Activated naive CD4-positive, alpha-beta T cell treated with anti-CD3 and anti-CD28 coated beads for 36 hours (primary cell): ENCODE measurements at regions of chr7 and their contacts with region 1.

Region 1: GRCh38 chr7:64902806-64903721 is at the start of gene ZNF273:
- DNase-seq: peak; percentile 97
- H3K4me3 Mint-ChIP-seq: peak within 1 kb of the TSS; percentile 96
- H3K27ac Mint-ChIP-seq: peak within 1 kb of the TSS; percentile 89
- H3K4me1 Mint-ChIP-seq: peaks cover 35% of the 10 kb centered on the region
- H3K27me3 Mint-ChIP-seq: no peaks in the 10 kb centered on the region
- total RNA-seq, gene ZNF273: 10.9 to 12.3 TPM

Region 2: GRCh38 chr7:63900394-63901203 is 1002.5 kb before region 1 on chr7:
- CTCF ChIA-PET with region 1: no interaction called
- intact Hi-C with region 1: loop called (anchors 2 kb)
- DNase-seq: peak; percentile 95
- H3K4me3 Mint-ChIP-seq: peak overlapping the region; percentile 93
- H3K27ac Mint-ChIP-seq: peak overlapping the region; percentile 77
- H3K4me1 Mint-ChIP-seq: peaks cover 8% of the 10 kb centered on the region
- H3K27me3 Mint-ChIP-seq: no peaks in the 10 kb centered on the region

Region 3: GRCh38 chr7:64313740-64314491 is 589.1 kb before region 1 on chr7 and contains the start of gene ZNF736:
- CTCF ChIA-PET with region 1: no interaction called
- intact Hi-C with region 1: loop called (anchors 2 kb)
- DNase-seq: peak; percentile 94
- H3K4me3 Mint-ChIP-seq: peak within 1 kb of the TSS; percentile 99
- H3K27ac Mint-ChIP-seq: peak within 1 kb of the TSS; percentile 97
- H3K4me1 Mint-ChIP-seq: peaks cover 35% of the 10 kb centered on the region
- H3K27me3 Mint-ChIP-seq: no peaks in the 10 kb centered on the region
- total RNA-seq, gene ZNF736: 22.7 to 24.0 TPM

Region 4: DNA sequence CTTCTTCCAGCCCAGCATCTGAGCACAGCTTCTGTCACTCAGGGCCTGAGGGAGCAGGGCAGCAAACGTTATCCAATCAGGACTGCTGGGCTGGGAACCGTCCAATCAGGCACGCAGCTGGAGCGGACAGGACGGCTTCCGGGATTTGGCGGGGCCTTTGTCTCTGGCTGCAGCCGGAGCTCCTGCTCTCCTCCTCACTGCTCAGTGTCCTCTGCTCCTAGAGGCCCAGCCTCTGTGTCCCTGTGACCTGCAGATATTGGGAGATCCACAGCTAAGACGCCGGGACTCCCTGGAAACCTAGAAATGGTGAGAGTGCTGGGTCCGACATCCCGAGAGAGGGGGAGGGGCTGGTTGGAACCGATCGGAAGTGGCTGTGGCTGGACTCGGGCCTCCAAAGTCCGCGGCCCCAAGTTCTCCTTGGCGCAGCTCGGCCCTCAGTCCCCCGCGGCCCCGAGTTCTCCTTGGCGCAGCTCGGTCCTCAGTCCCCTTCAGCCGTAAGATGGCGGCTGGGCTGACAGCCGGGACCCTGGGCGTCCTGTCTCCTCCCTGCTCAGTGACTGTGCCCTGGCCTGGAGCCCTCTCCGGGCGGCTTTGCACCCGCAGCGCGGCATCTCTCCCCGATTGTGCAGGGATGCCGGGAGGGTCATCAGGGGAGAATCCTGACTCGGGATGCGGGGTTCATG is 236.9 kb before region 1 on chr7 and contains the start of gene ZNF107:
- CTCF ChIA-PET with region 1: no interaction called
- intact Hi-C with region 1: loop called (anchors 2 kb)
- DNase-seq: peak; percentile 93
- H3K4me3 Mint-ChIP-seq: peak within 1 kb of the TSS; percentile 95
- H3K27ac Mint-ChIP-seq: peak within 1 kb of the TSS; percentile 96
- H3K4me1 Mint-ChIP-seq: peaks cover 47% of the 10 kb centered on the region
- H3K27me3 Mint-ChIP-seq: no peaks in the 10 kb centered on the region
- total RNA-seq, gene ZNF107: 7.7 to 8.0 TPM

Region 5: GRCh38 chr7:64876792-64877713 is 26.0 kb before region 1 on chr7:
- CTCF ChIA-PET with region 1: no interaction called
- intact Hi-C with region 1: no loop called
- DNase-seq: peak; percentile 56
- H3K4me3 Mint-ChIP-seq: peak overlapping the region; percentile 55
- H3K27ac Mint-ChIP-seq: no peak overlapping the region
- H3K4me1 Mint-ChIP-seq: peaks cover 2% of the 10 kb centered on the region
- H3K27me3 Mint-ChIP-seq: peaks cover 29% of the 10 kb centered on the region

Region 6: GRCh38 chr7:64887756-64888508 is 15.1 kb before region 1 on chr7:
- CTCF ChIA-PET with region 1: interaction called, 7 read pairs
- intact Hi-C with region 1: loop called (anchors 2 kb)
- DNase-seq: peak; percentile 66
- H3K4me3 Mint-ChIP-seq: peak overlapping the region; percentile 77
- H3K27ac Mint-ChIP-seq: no peak overlapping the region
- H3K4me1 Mint-ChIP-seq: peaks cover 15% of the 10 kb centered on the region
- H3K27me3 Mint-ChIP-seq: peaks cover 62% of the 10 kb centered on the region

Region 7: GRCh38 chr7:65006094-65006992 is 103.3 kb after region 1 on chr7 and contains the start of gene ERV3-1:
- CTCF ChIA-PET with region 1: no interaction called
- intact Hi-C with region 1: loop called (anchors 2 kb)
- DNase-seq: peak; percentile 97
- H3K4me3 Mint-ChIP-seq: peak within 1 kb of the TSS; percentile 93
- H3K27ac Mint-ChIP-seq: peak within 1 kb of the TSS; percentile 85
- H3K4me1 Mint-ChIP-seq: peaks cover 28% of the 10 kb centered on the region
- H3K27me3 Mint-ChIP-seq: no peaks in the 10 kb centered on the region
- total RNA-seq, gene ERV3-1: 8.9 to 10.6 TPM